ENCODE measurements at regions of chr19 and their contacts with region 1.

Region 1: GRCh38 chr19:55146078-55146704 is 2.8 kb downstream of the TNNT1 start:
- DNase-seq: no peak
- H3K4me3 ChIP-seq: no peak overlapping the region
- H3K27ac ChIP-seq: no peak overlapping the region
- H3K4me1 ChIP-seq: no peaks in the 10 kb centered on the region
- H3K27me3 ChIP-seq: peaks cover 7 to 15% of the 10 kb centered on the region in 2 experiments
- CTCF ChIP-seq: peak; percentile 34 to 55
- POLR2A ChIP-seq: no peak

Region 2: GRCh38 chr19:55099533-55100506 is 46.4 kb before region 1 on chr19:
- CTCF ChIA-PET with region 1: no interaction called
- POLR2A ChIA-PET with region 1: no interaction called
- dilution Hi-C with region 1: no loop called
- intact Hi-C with region 1: no loop called
- DNase-seq: no peak
- H3K4me3 ChIP-seq: no peak overlapping the region
- H3K27ac ChIP-seq: no peak overlapping the region
- H3K4me1 ChIP-seq: no peaks in the 10 kb centered on the region
- H3K27me3 ChIP-seq: no peaks in the 10 kb centered on the region
- CTCF ChIP-seq: no peak
- POLR2A ChIP-seq: no peak

Region 3: DNA sequence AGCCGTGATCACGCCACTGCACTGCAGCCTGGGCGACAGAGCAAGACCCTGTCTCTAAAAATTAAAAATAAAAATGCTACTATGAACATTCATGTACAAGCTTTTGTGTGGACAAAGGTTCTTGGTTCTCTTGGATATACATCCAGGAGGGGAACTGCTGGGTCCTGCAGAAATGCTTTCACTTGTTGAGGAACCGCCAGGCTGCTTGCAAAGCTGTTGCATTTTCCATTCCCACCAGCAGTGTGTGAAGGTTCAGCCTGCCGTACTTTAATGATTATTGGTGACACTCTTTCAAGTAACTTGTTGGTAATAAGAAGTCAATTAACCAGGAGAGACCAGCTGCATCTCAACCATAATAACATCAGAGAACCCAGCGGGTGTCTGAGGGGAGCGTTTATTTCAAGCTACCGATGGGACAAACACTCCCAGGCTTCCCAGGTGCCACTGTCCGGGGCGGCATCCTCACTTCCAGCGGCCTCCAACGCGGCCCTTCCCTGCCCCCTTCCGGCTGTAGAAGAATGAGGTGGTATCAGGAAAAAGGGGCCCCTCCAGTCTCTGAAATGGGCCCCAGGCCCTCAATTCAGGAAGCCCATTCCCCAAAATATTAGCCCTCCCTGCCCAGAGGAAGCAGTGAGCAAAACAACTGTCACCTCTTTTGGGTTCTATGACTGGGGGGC is 13.6 kb before region 1 on chr19:
- CTCF ChIA-PET with region 1: interaction called, 13 read pairs
- POLR2A ChIA-PET with region 1: no interaction called
- dilution Hi-C with region 1: no loop called
- intact Hi-C with region 1: no loop called
- DNase-seq: no peak
- H3K4me3 ChIP-seq: no peak overlapping the region
- H3K27ac ChIP-seq: no peak overlapping the region
- H3K4me1 ChIP-seq: no peaks in the 10 kb centered on the region
- H3K27me3 ChIP-seq: peaks cover 0 to 4% of the 10 kb centered on the region in 2 experiments
- CTCF ChIP-seq: peak; percentile 15 to 23
- POLR2A ChIP-seq: no peak

Region 4: GRCh38 chr19:55166530-55167268 is 20.5 kb after region 1 on chr19 and contains the start of gene DNAAF3:
- CTCF ChIA-PET with region 1: interaction called, 64 read pairs
- POLR2A ChIA-PET with region 1: no interaction called
- dilution Hi-C with region 1: no loop called
- intact Hi-C with region 1: no loop called
- DNase-seq: peak; percentile 97
- H3K4me3 ChIP-seq: peak within 1 kb of the TSS in 2 of 3 experiments; percentile 25 to 52
- H3K27ac ChIP-seq: no peak within 1 kb of the TSS
- H3K4me1 ChIP-seq: no peaks in the 10 kb centered on the region
- H3K27me3 ChIP-seq: peaks cover 8 to 15% of the 10 kb centered on the region in 2 experiments
- CTCF ChIP-seq: no peak
- POLR2A ChIP-seq: no peak
- total RNA-seq, gene DNAAF3: 0.62 TPM in 1 of 2 replicates, not detected in the other

Region 5: GRCh38 chr19:55385740-55386529 is 239.7 kb after region 1 on chr19 and contains the start of gene RPL28:
- CTCF ChIA-PET with region 1: interaction called, 13 read pairs
- POLR2A ChIA-PET with region 1: interaction called, 3 read pairs
- dilution Hi-C with region 1: no loop called
- intact Hi-C with region 1: loop called (anchors 10 kb)
- DNase-seq: peak; percentile 99
- H3K4me3 ChIP-seq: peak within 1 kb of the TSS; percentile 33 to 69 (median 67)
- H3K27ac ChIP-seq: peak within 1 kb of the TSS; percentile 75
- H3K4me1 ChIP-seq: peaks cover 31% of the 10 kb centered on the region
- H3K27me3 ChIP-seq: no peaks in the 10 kb centered on the region
- CTCF ChIP-seq: no peak
- POLR2A ChIP-seq: peak; percentile 100
- total RNA-seq, gene RPL28: 1,738 and 1,872 TPM in 2 replicates

Region 6: DNA sequence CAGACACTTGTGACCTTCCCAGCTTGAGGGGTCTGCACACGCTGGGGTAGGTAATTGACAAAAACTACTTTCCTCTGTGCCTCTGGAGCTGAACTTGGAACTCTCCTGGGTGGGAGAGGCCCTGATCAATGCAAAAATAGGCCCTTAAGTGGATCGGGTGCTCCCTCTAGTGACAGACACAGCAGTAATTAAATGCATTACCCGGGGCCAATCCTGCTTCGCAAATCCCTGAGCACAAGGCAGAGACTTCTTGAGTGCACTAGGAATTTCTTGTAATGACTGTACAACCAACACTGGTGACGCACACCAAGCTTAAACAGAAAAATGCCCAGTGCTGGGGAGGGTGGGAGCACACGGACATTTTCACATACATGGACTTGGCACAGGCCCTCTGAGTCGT is 272.0 kb after region 1 on chr19:
- CTCF ChIA-PET with region 1: interaction called, 69 read pairs
- POLR2A ChIA-PET with region 1: no interaction called
- dilution Hi-C with region 1: no loop called
- intact Hi-C with region 1: loop called (anchors 1 kb)
- DNase-seq: peak; percentile 71
- H3K4me3 ChIP-seq: no peak overlapping the region
- H3K27ac ChIP-seq: no peak overlapping the region
- H3K4me1 ChIP-seq: no peaks in the 10 kb centered on the region
- H3K27me3 ChIP-seq: peaks cover 0 to 5% of the 10 kb centered on the region in 2 experiments
- CTCF ChIP-seq: peak; percentile 64 to 71
- POLR2A ChIP-seq: no peak

Region 7: GRCh38 chr19:55467236-55468053 is 321.3 kb after region 1 on chr19:
- CTCF ChIA-PET with region 1: interaction called, 12 read pairs
- POLR2A ChIA-PET with region 1: no interaction called
- dilution Hi-C with region 1: no loop called
- intact Hi-C with region 1: no loop called
- DNase-seq: peak; percentile 38
- H3K4me3 ChIP-seq: no peak overlapping the region
- H3K27ac ChIP-seq: no peak overlapping the region
- H3K4me1 ChIP-seq: no peaks in the 10 kb centered on the region
- H3K27me3 ChIP-seq: no peaks in the 10 kb centered on the region
- CTCF ChIP-seq: peak; percentile 97 to 99
- POLR2A ChIP-seq: no peak

Measured in endothelial cell of umbilical vein (primary cell).